Mammary epithelial cell (primary cell): ENCODE measurements at regions of chr10 and their contacts with region 1.

Region 1: DNA sequence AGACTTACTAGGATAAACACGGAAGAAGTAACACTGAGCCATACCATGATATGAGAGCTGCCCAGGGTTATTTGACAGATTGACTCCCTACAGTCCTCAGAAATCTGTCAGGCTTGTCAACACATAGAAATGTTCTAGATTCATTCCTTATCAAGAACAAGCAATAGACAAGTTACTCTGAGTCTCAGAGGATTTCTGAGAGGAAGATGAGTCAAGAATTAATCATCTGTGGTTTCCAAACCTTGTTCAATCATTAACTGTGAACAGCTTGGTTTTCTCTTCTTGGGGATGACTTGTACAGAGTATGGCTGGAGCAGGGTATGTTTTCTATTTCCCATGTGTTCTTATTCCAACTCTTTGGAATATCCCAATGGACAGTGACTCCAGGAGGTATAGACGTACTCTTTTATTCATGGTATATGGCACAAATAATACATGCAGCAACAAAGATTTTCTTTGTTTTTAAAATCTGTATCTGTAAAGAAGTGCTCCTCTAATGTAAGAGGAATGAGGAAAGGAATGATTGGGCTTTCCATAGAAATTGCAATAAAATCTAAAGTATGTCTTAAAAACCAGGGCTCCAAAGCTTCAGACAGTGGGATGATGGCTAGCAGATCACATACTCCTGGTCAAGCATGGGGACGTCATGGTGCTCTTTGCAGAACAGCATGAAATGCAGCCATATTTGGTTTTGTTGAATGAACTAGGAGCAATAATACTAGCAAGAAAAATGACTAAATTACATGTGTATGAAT is 11.9 kb upstream of the SFR1 start:
- DNase-seq: peak; percentile 94
- H3K4me3 ChIP-seq: no peak overlapping the region
- H3K27ac ChIP-seq: peak overlapping the region; percentile 69
- H3K4me1 ChIP-seq: peaks cover 27% of the 10 kb centered on the region
- H3K27me3 ChIP-seq: no peaks in the 10 kb centered on the region
- CTCF ChIP-seq: no peak

Region 2: DNA sequence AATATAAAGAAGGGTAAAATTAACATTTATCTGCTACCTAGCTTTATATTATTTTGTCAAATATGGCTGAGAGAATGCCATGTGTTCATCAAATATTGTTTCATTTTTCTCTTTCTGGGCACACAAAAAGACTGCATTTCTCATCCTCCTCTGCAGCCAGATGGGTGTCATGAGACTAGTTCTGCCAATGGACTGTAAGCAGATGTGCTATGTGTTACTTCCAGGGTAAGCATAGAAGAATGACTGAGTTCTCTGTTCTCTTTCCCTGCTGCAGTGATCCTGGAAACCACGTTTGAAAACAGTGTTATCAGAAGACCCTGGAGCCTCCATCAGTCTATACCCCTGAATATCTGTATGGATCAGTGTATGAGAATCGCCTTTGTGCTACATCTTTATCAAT is 167.2 kb before region 1 on chr10:
- CTCF ChIA-PET with region 1: no interaction called
- dilution Hi-C with region 1: no loop called
- in situ Hi-C with region 1: no loop called
- intact Hi-C with region 1: no loop called
- DNase-seq: no peak
- H3K4me3 ChIP-seq: no peak overlapping the region
- H3K27ac ChIP-seq: peak overlapping the region; percentile 80
- H3K4me1 ChIP-seq: peaks cover 24% of the 10 kb centered on the region
- H3K27me3 ChIP-seq: no peaks in the 10 kb centered on the region
- CTCF ChIP-seq: no peak

Region 3: GRCh38 chr10:104099274-104099673 is 10.8 kb before region 1 on chr10:
- CTCF ChIA-PET with region 1: no interaction called
- dilution Hi-C with region 1: no loop called
- in situ Hi-C with region 1: no loop called
- intact Hi-C with region 1: loop called (anchors 2 kb)
- DNase-seq: no peak
- H3K4me3 ChIP-seq: no peak overlapping the region
- H3K27ac ChIP-seq: no peak overlapping the region
- H3K4me1 ChIP-seq: peaks cover 13% of the 10 kb centered on the region
- H3K27me3 ChIP-seq: no peaks in the 10 kb centered on the region
- CTCF ChIP-seq: no peak

Region 4: GRCh38 chr10:104376784-104377300 is 266.8 kb after region 1 on chr10:
- CTCF ChIA-PET with region 1: no interaction called
- dilution Hi-C with region 1: no loop called
- in situ Hi-C with region 1: no loop called
- intact Hi-C with region 1: no loop called
- DNase-seq: no peak
- H3K4me3 ChIP-seq: no peak overlapping the region
- H3K27ac ChIP-seq: no peak overlapping the region
- H3K4me1 ChIP-seq: no peaks in the 10 kb centered on the region
- H3K27me3 ChIP-seq: no peaks in the 10 kb centered on the region
- CTCF ChIP-seq: no peak